CD4-positive, alpha-beta T cell (primary cell): ENCODE measurements at regions of chr7 and their contacts with region 1.

Region 1: DNA sequence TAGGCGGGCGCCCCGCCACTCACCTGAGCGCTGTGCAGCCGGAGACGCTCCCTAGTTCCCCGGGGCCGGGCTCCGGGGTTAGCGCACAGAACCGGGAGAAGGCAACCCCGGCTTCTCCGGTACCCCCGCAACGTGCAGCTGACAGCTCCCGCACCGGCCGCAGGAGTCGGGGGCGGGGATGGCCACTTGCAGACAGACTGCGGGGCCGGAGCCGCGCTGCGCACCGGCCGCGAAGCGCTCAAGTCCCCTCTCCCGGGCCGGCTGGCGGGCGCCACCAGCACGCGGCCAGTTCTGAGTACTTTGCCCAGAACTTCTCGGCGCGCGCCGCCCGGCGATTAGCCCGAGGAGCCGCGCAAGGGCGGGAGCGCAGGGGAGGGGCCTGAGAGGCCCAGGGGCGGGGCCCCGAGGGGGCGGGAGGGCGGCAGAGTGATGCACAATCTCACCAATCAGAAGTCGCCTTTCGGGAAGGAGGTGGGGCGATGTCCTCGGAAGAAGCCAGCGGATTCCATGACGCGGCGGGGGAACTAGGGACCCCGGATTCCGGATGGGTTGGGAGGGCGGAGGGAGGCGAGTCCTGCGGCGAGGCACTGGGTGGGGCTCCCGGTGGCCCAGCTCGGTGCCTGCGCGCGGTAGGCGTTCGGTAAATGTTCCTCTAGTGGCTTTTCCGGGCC is at the start of gene OSBPL3:
- DNase-seq: peak; percentile 90 to 98 (median 94)
- ATAC-seq: peak; percentile 80
- H3K4me3 ChIP-seq: peak within 1 kb of the TSS; percentile 84
- H3K4me3 Mint-ChIP-seq: peak within 1 kb of the TSS; percentile 98
- H3K27ac ChIP-seq: peak within 1 kb of the TSS; percentile 71 to 77
- H3K27ac Mint-ChIP-seq: peak within 1 kb of the TSS; percentile 86
- H3K4me1 ChIP-seq: peaks cover 47% of the 10 kb centered on the region
- H3K4me1 Mint-ChIP-seq: peaks cover 66% of the 10 kb centered on the region
- H3K27me3 ChIP-seq: no peaks in the 10 kb centered on the region
- H3K27me3 Mint-ChIP-seq: no peaks in the 10 kb centered on the region
- CTCF ChIP-seq: peak; percentile 6
- total RNA-seq, gene OSBPL3: 25.4 to 25.9 TPM

Region 2: DNA sequence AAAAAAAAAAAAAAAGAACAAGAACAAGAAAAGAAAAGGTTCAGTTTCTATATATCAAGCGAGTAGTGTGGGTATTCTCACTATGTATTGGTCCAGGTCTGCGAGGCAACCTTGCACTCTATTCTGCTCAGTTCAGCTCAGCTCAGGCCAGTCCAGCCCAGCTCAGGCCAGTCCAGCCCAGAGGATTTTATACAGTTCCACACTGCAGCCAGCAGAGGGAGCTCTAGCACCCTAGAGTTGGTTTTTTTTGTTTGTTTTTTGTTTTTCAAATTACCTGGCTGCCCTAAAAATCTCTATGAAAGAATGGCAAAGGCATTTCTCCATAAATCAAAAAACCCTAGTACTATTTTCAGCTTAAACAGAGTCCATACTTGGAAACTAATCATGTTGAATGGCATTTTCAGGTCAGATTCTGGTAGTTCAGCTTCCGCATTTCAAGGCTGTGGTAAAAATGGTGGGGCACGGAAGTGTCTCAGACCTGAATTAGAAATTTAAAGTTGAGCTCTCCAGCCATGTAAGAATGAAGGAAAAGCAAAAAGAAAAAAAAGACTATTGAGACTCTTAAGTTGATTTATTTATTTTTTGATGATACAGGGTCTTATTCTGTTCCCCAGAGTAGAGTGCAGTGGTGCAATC is 167.6 kb before region 1 on chr7:
- CTCF ChIA-PET with region 1: interaction called, 13 read pairs
- POLR2A ChIA-PET with region 1: interaction called, 5 read pairs
- intact Hi-C with region 1: no loop called
- DNase-seq: peak; percentile 11 to 74 (median 38)
- ATAC-seq: peak; percentile 71
- H3K4me3 ChIP-seq: no peak overlapping the region
- H3K4me3 Mint-ChIP-seq: no peak overlapping the region
- H3K27ac ChIP-seq: no peak overlapping the region
- H3K27ac Mint-ChIP-seq: no peak overlapping the region
- H3K4me1 ChIP-seq: no peaks in the 10 kb centered on the region
- H3K4me1 Mint-ChIP-seq: no peaks in the 10 kb centered on the region
- H3K27me3 ChIP-seq: no peaks in the 10 kb centered on the region
- H3K27me3 Mint-ChIP-seq: no peaks in the 10 kb centered on the region
- CTCF ChIP-seq: peak; percentile 96

Region 3: DNA sequence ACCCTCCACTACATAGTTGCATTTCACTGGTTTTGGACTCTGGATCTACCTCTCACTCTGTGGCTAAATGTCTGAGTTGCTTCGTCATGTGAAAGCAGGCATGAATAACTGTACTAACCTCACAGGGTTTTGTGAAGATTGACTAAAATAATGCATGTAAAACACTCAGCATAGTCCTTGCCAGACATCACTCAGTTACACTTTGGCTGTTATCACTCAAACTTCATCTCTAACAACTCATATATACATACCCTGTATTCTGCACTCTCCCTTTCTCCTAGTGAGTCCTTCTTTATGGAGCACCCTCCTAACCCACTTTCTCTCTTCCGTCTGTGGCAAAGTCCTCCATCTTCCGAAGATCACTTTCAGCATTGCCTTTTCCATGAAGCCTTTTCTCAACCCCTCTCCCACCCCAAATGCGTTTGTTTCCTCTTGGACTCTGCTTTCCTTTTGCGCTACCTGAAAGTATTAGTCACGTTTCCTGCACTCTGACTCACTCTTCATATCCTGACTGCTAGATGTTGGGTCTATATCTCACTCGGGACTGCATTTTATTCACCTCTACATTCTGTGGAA is 72.6 kb before region 1 on chr7:
- CTCF ChIA-PET with region 1: interaction called, 4 read pairs
- POLR2A ChIA-PET with region 1: interaction called, 26 read pairs
- intact Hi-C with region 1: loop called (anchors 5 kb)
- DNase-seq: peak in 7 of 14 experiments; percentile 3 to 73 (median 44)
- ATAC-seq: peak; percentile 76
- H3K4me3 ChIP-seq: peak overlapping the region; percentile 9
- H3K4me3 Mint-ChIP-seq: no peak overlapping the region
- H3K27ac ChIP-seq: no peak overlapping the region
- H3K27ac Mint-ChIP-seq: no peak overlapping the region
- H3K4me1 ChIP-seq: peaks cover 60% of the 10 kb centered on the region
- H3K4me1 Mint-ChIP-seq: peaks cover 32% of the 10 kb centered on the region
- H3K27me3 ChIP-seq: no peaks in the 10 kb centered on the region
- H3K27me3 Mint-ChIP-seq: no peaks in the 10 kb centered on the region
- CTCF ChIP-seq: no peak

Region 4: DNA sequence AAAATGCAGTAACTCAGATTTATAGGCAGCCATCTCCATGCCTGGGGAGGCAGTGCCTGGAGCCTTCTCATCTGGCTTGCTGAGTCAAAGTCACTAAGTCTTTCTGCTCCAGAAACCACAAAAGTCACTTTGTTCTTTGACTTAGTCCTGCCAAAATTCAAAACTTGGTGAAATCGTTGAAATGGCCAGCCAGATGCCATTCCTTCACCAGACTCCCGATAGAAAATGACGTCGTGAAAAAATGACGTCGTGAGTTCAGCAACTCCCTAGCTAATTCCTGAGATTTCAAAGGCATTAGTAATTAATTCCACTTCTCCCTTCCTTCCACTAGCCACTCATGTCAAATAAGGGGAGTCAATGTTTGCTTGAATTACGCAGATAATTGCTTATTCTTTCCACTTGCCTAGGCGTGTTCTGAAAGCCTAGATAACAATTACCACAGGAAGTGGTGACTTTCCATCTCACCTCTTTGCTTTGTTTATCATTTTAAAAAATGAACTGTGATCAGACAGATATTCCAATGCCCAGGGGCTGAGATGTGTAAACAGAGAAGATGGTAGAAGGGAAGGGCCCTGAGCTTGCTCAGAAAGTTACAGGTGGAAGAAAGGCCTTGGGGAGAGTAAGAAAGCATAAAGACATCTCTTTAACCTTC is 48.5 kb after region 1 on chr7:
- CTCF ChIA-PET with region 1: interaction called, 4 read pairs
- POLR2A ChIA-PET with region 1: interaction called, 61 read pairs
- intact Hi-C with region 1: loop called (anchors 2 to 5 kb)
- DNase-seq: peak in 6 of 14 experiments; percentile 2 to 84 (median 38)
- ATAC-seq: peak; percentile 85
- H3K4me3 ChIP-seq: no peak overlapping the region
- H3K4me3 Mint-ChIP-seq: peak overlapping the region; percentile 23
- H3K27ac ChIP-seq: peak overlapping the region; percentile 29 to 73
- H3K27ac Mint-ChIP-seq: peak overlapping the region; percentile 85
- H3K4me1 ChIP-seq: peaks cover 45% of the 10 kb centered on the region
- H3K4me1 Mint-ChIP-seq: peaks cover 48% of the 10 kb centered on the region
- H3K27me3 ChIP-seq: no peaks in the 10 kb centered on the region
- H3K27me3 Mint-ChIP-seq: no peaks in the 10 kb centered on the region
- CTCF ChIP-seq: no peak

Region 5: DNA sequence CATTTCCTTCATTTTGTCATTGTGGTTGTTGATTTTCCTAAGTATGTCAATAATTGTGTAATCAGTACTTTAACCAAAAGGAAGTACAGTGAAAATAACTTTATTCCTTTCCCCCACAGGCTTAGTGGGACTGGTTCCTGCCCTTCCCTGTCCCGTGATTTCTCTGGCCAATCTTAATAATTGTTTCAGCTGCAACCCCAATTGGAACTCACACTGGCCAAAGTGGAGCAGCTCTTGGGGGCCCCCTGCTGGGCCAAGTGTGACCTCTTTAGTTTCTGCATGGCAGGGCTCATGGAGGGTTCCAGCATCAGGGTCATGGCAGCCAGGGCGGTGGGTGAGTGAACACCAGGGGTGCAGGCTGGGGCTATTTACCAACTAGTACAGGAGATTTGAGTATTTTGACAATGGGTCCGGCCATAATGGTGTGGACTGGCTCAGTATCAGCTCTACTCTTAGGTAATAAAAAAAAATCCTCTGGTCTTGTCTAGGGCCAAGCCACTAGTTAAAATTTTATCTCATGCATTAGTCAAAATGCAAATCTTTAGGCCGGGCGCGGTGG is 113.3 kb after region 1 on chr7:
- CTCF ChIA-PET with region 1: interaction called, 21 read pairs
- POLR2A ChIA-PET with region 1: interaction called, 6 read pairs
- intact Hi-C with region 1: no loop called
- DNase-seq: peak; percentile 59 to 82 (median 70)
- ATAC-seq: peak; percentile 80
- H3K4me3 ChIP-seq: no peak overlapping the region
- H3K4me3 Mint-ChIP-seq: no peak overlapping the region
- H3K27ac ChIP-seq: no peak overlapping the region
- H3K27ac Mint-ChIP-seq: no peak overlapping the region
- H3K4me1 ChIP-seq: peaks cover 9% of the 10 kb centered on the region
- H3K4me1 Mint-ChIP-seq: peaks cover 12% of the 10 kb centered on the region
- H3K27me3 ChIP-seq: no peaks in the 10 kb centered on the region
- H3K27me3 Mint-ChIP-seq: peaks cover 4% of the 10 kb centered on the region
- CTCF ChIP-seq: peak; percentile 93

Region 6: DNA sequence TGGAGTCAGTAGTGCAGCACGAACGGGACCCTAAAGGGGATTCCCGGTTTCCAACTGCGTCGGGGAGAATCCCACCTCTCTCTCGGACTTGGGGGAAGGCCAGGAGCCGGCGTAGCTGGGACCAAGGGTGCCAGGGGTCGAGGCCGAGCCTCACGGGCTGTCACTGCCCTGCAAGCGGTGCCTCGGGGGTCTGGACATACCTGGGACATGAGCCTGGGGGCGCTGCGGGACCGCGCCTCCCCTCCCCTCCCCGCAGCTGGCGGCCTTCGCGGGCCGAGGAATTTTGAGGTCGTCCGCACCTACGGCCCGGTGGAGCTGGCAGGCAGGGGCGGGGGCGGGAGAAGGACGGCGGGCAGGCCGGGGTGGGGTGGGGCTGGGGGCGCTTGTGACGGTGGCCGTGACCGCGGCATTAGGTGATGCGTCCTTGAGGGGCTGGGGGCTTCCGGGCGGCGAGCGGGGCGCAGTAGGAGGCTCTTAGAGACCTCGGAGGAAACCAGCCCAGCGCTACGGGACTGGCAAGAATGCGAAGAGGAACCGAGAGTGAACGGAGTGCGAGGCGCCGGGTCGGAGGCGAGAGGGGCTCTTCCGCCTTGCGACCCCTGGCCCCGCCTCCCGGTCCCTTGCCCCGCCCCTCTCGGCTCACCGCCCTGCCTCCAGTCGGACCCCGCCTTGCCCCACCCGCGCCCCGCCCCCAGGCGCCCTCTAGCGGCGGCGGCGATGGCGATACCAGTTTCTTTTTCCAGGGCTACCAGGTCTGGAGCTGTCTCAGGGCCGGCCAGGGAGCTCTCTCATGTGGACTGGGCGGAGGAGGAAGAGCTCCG is 200.0 kb after region 1 on chr7:
- CTCF ChIA-PET with region 1: no interaction called
- POLR2A ChIA-PET with region 1: no interaction called
- intact Hi-C with region 1: loop called in 1 of 2 experiments (anchors 5 kb)
- DNase-seq: peak; percentile 89 to 98 (median 95)
- ATAC-seq: peak; percentile 96
- H3K4me3 ChIP-seq: peak overlapping the region; percentile 77
- H3K4me3 Mint-ChIP-seq: peak overlapping the region; percentile 92
- H3K27ac ChIP-seq: peak overlapping the region; percentile 56 to 68
- H3K27ac Mint-ChIP-seq: peak overlapping the region; percentile 80
- H3K4me1 ChIP-seq: peaks cover 18% of the 10 kb centered on the region
- H3K4me1 Mint-ChIP-seq: peaks cover 24% of the 10 kb centered on the region
- H3K27me3 ChIP-seq: no peaks in the 10 kb centered on the region
- H3K27me3 Mint-ChIP-seq: no peaks in the 10 kb centered on the region
- CTCF ChIP-seq: peak; percentile 90

Region 7: DNA sequence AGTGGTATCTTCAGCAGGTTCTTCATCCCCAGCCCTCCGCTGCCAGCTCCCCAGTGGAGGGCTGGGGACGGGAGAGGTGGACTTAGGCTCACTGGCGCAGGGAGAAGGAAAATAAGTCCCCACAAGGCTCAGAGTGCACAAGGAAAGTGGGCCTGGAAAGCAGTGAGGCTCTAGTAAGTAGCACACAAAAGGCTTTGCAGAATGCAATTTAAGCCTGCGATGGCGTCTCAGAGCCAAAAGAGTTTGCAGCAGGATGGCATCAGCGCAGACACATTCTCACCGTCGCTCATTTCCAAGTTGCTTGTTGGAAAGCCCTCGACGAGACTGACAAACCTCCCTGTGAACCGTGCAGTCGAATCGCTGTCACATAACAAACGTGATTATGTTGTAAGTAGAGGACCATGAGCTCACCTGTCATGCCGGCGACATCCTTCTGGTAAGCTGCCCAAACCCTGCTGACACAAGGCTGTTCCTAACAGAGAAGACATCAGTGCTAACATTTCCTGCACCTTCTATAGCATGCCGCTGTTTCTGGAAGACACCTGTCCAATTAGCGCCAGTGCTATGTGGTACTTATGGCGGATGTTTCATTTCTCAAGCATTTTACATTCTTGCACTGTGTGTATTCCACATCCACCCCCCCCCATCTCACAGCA is 346.6 kb after region 1 on chr7:
- CTCF ChIA-PET with region 1: no interaction called
- POLR2A ChIA-PET with region 1: no interaction called
- intact Hi-C with region 1: no loop called
- DNase-seq: no peak
- ATAC-seq: no peak
- H3K4me3 ChIP-seq: no peak overlapping the region
- H3K4me3 Mint-ChIP-seq: no peak overlapping the region
- H3K27ac ChIP-seq: no peak overlapping the region
- H3K27ac Mint-ChIP-seq: no peak overlapping the region
- H3K4me1 ChIP-seq: no peaks in the 10 kb centered on the region
- H3K4me1 Mint-ChIP-seq: no peaks in the 10 kb centered on the region
- H3K27me3 ChIP-seq: peaks cover 0 to 13% of the 10 kb centered on the region in 2 experiments
- H3K27me3 Mint-ChIP-seq: peaks cover 23% of the 10 kb centered on the region
- CTCF ChIP-seq: no peak